CD4-positive, alpha-beta T cell (primary cell): ENCODE measurements at regions of chr2 and their contacts with region 1.

Region 1: DNA sequence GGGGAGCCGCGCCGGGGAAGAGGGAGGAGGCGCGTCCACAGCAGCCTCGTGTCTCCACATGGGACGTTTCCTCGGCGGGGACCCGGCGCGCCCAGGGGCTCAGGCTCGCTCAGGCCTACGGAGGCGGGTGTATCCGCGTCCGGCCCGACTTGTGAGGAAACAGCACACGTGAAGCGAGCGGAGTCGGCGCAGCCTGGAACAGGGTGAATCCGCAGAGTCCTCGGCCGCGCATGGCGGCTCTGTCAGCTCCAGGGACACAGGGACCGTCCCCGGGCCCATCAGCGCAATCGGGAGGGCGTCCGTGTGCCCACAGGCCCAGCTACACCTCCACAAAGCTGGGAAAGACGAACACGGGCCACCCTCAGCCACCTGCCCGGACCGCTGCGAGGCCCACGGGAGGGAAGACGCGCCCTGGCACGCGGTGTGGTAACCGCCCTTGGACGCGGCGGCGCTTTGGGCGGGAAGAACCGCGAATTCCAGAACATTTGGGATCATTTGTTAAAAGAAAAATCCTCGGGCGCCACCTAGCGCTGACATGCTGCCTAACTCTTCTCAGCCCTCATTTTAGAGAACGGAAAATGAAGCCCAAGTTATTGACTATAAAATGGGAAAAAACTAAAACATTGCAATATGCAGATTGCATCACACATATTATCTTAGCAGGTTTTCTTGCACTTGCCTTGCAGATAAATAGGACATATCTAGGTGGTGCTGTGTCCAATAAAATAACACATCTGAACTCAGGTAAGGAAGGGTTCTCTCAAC is 40.4 kb downstream of the TMEM18 start:
- DNase-seq: peak; percentile 26 to 73 (median 44)
- ATAC-seq: peak; percentile 68
- H3K4me3 ChIP-seq: peak overlapping the region; percentile 73
- H3K4me3 Mint-ChIP-seq: peak overlapping the region; percentile 89
- H3K27ac ChIP-seq: no peak overlapping the region
- H3K27ac Mint-ChIP-seq: no peak overlapping the region
- H3K4me1 ChIP-seq: peaks cover 11% of the 10 kb centered on the region
- H3K4me1 Mint-ChIP-seq: peaks cover 6% of the 10 kb centered on the region
- H3K27me3 ChIP-seq: no peaks in the 10 kb centered on the region
- H3K27me3 Mint-ChIP-seq: peaks cover 4% of the 10 kb centered on the region
- CTCF ChIP-seq: peak; percentile 93

Region 2: DNA sequence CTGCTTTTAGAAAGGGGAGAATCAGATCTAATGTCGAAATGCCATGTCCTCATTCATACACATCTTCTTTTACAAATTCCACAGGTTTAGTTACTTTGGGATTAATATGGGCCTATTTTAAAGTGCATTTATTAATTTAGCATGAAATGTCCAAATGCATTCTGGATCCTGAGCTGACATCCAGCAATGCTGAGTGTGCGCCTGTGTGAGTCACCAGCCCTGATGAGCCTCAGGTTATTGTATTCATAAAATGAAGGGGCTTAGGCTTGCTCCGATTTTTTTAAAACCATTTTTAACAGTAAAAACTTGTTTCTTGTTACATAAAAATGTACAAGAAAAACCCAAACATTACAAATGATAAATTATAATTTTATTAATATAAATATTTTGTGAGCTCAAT is 467.1 kb before region 1 on chr2:
- CTCF ChIA-PET with region 1: no interaction called
- POLR2A ChIA-PET with region 1: no interaction called
- intact Hi-C with region 1: loop called (anchors 1 to 5 kb)
- DNase-seq: no peak
- ATAC-seq: no peak
- H3K4me3 ChIP-seq: no peak overlapping the region
- H3K4me3 Mint-ChIP-seq: no peak overlapping the region
- H3K27ac ChIP-seq: no peak overlapping the region
- H3K27ac Mint-ChIP-seq: no peak overlapping the region
- H3K4me1 ChIP-seq: peaks cover 7% of the 10 kb centered on the region
- H3K4me1 Mint-ChIP-seq: peaks cover 12% of the 10 kb centered on the region
- H3K27me3 ChIP-seq: no peaks in the 10 kb centered on the region
- H3K27me3 Mint-ChIP-seq: peaks cover 4% of the 10 kb centered on the region
- CTCF ChIP-seq: no peak

Region 3: DNA sequence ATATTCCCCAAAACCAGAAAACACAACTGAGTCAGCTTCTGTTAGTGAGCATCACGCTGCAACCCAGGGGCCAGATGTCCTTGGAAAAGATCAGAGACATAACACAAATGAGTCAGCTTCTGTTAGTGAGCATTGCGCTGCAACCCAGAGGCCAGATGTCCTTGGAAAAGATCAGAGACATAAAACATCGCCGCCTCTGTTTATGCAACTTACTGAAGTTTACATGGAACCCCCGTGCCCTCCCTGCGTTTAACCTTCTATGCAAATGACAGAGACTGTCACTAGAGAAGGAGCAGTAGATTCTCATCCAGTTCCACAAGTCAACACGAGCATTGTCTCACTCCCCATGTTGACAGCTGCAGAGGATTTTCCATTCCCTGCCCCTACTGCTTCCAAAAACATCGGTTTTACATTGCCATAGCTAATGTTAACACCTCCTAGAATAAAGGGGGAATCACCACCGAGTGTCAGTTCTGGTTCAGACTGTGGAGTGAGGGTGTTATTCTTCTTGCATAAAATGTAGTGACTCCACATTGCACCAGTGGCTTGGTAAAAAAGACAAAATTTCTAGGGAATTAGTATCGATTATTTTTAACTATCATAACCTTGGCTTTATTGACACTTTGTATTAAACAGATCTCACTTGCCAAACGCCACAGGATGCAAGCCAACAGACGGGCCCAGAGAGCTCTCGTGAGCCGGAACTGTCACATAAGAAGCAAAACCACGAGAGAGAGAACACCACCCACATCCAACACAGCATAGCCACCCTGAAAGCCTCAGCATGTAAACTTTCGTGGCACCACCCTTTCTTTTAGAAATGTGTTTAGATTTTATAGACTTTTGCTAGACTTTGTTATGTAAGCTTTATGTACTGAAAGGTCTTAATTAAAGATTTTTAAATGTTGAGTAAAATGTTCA is 460.7 kb before region 1 on chr2:
- CTCF ChIA-PET with region 1: no interaction called
- POLR2A ChIA-PET with region 1: no interaction called
- intact Hi-C with region 1: loop called (anchors 1 to 5 kb)
- DNase-seq: peak; percentile 14 to 82 (median 52)
- ATAC-seq: peak; percentile 95
- H3K4me3 ChIP-seq: peak overlapping the region; percentile 9
- H3K4me3 Mint-ChIP-seq: peak overlapping the region; percentile 76
- H3K27ac ChIP-seq: peak overlapping the region in 1 of 2 donors; percentile 50
- H3K27ac Mint-ChIP-seq: peak overlapping the region; percentile 92
- H3K4me1 ChIP-seq: peaks cover 38% of the 10 kb centered on the region
- H3K4me1 Mint-ChIP-seq: peaks cover 48% of the 10 kb centered on the region
- H3K27me3 ChIP-seq: no peaks in the 10 kb centered on the region
- H3K27me3 Mint-ChIP-seq: no peaks in the 10 kb centered on the region
- CTCF ChIP-seq: no peak

Region 4: GRCh38 chr2:246489-247144 is 390.2 kb before region 1 on chr2:
- CTCF ChIA-PET with region 1: interaction called, 8 read pairs
- POLR2A ChIA-PET with region 1: no interaction called
- intact Hi-C with region 1: loop called (anchors 1 to 2 kb)
- DNase-seq: peak in 9 of 14 experiments; percentile 5 to 75 (median 14)
- ATAC-seq: peak; percentile 60
- H3K4me3 ChIP-seq: no peak overlapping the region
- H3K4me3 Mint-ChIP-seq: no peak overlapping the region
- H3K27ac ChIP-seq: no peak overlapping the region
- H3K27ac Mint-ChIP-seq: no peak overlapping the region
- H3K4me1 ChIP-seq: no peaks in the 10 kb centered on the region
- H3K4me1 Mint-ChIP-seq: peaks cover 7% of the 10 kb centered on the region
- H3K27me3 ChIP-seq: no peaks in the 10 kb centered on the region
- H3K27me3 Mint-ChIP-seq: no peaks in the 10 kb centered on the region
- CTCF ChIP-seq: peak; percentile 79

Region 5: GRCh38 chr2:290090-290722 is 346.6 kb before region 1 on chr2:
- CTCF ChIA-PET with region 1: no interaction called
- POLR2A ChIA-PET with region 1: no interaction called
- intact Hi-C with region 1: loop called in 1 of 2 experiments (anchors 2 kb)
- DNase-seq: peak; percentile 18 to 70 (median 49)
- ATAC-seq: peak; percentile 51
- H3K4me3 ChIP-seq: peak overlapping the region; percentile 25
- H3K4me3 Mint-ChIP-seq: peak overlapping the region; percentile 81
- H3K27ac ChIP-seq: no peak overlapping the region
- H3K27ac Mint-ChIP-seq: no peak overlapping the region
- H3K4me1 ChIP-seq: peaks cover 17% of the 10 kb centered on the region
- H3K4me1 Mint-ChIP-seq: peaks cover 16% of the 10 kb centered on the region
- H3K27me3 ChIP-seq: peaks cover 39 to 40% of the 10 kb centered on the region in 2 experiments
- H3K27me3 Mint-ChIP-seq: peaks cover 65% of the 10 kb centered on the region
- CTCF ChIP-seq: peak; percentile 76

Region 6: DNA sequence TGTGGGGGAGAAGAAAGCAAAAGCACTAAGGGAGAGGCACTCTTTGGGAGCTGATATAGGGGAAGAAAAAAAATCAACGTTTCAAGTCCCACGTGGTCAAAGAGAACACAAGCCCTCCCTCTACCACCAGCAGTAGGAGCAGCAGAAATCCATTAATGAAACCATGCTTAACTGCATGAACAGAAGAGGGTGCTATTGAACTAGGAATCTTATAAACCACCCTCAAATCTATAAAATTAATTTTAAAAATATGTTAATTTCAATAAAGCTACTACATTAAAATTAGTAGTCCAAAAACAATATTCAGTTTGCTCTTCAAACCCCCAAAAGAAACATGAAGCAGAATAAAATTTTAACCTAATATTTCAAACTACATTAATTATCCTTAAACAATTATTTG is 107.4 kb before region 1 on chr2:
- CTCF ChIA-PET with region 1: no interaction called
- POLR2A ChIA-PET with region 1: no interaction called
- intact Hi-C with region 1: loop called (anchors 1 to 2 kb)
- DNase-seq: peak in 3 of 14 experiments; percentile 38 to 48 (median 46)
- ATAC-seq: peak; percentile 26
- H3K4me3 ChIP-seq: no peak overlapping the region
- H3K4me3 Mint-ChIP-seq: no peak overlapping the region
- H3K27ac ChIP-seq: no peak overlapping the region
- H3K27ac Mint-ChIP-seq: no peak overlapping the region
- H3K4me1 ChIP-seq: no peaks in the 10 kb centered on the region
- H3K4me1 Mint-ChIP-seq: no peaks in the 10 kb centered on the region
- H3K27me3 ChIP-seq: peaks cover 3 to 6% of the 10 kb centered on the region in 2 experiments
- H3K27me3 Mint-ChIP-seq: peaks cover 14% of the 10 kb centered on the region
- CTCF ChIP-seq: peak; percentile 41

Region 7: DNA sequence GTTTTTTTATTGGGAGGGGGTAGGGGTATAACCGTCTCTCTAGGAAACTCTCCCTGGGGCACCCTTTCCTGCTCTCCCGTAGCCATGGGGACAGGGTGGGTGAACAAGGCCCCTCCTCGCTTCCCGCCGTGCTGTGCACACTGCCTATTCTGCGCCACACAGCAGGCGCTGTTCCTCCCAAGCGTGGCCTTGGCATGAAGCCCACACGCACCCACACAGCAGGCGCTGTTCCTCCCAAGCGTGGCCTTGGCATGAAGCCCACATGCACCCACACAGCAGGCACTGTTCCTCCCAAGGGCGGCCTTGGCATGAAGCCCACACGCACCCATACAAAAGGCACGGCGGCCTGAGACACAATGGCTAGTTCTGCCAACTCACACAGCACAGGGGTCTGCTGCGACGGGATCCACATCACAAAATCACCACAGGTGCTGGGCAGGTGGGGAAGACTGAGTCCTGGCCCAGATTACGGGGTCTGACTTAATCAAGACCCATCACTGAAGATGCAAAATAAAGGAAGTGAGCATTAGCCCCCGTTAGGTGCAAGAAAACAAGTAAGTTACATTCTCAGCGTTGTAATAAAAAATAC is 729.8 kb after region 1 on chr2:
- CTCF ChIA-PET with region 1: no interaction called
- POLR2A ChIA-PET with region 1: no interaction called
- intact Hi-C with region 1: no loop called
- DNase-seq: peak in 3 of 14 experiments; percentile 15 to 40 (median 19)
- ATAC-seq: no peak
- H3K4me3 ChIP-seq: no peak overlapping the region
- H3K4me3 Mint-ChIP-seq: no peak overlapping the region
- H3K27ac ChIP-seq: no peak overlapping the region
- H3K27ac Mint-ChIP-seq: no peak overlapping the region
- H3K4me1 ChIP-seq: peaks cover 6% of the 10 kb centered on the region
- H3K4me1 Mint-ChIP-seq: peaks cover 6% of the 10 kb centered on the region
- H3K27me3 ChIP-seq: peaks cover 0 to under 1% of the 10 kb centered on the region in 2 experiments
- H3K27me3 Mint-ChIP-seq: no peaks in the 10 kb centered on the region
- CTCF ChIP-seq: no peak